Right cardiac atrium (tissue), 5 donors: ENCODE measurements at regions of chr12 and their contacts with region 1.

Region 1: GRCh38 chr12:116525418-116526001 is 33.7 kb upstream of the MAP1LC3B2 start:
- DNase-seq: peak; percentile 79 to 89 (median 85)
- ATAC-seq: peak; percentile 93 to 97
- H3K4me3 ChIP-seq: no peak overlapping the region
- H3K27ac ChIP-seq: peak overlapping the region; percentile 69
- H3K4me1 ChIP-seq: peaks cover 2% of the 10 kb centered on the region
- H3K27me3 ChIP-seq: no peaks in the 10 kb centered on the region

Region 2: GRCh38 chr12:115640929-115641328 is 884.6 kb before region 1 on chr12:
- intact Hi-C with region 1: loop called in 1 of 4 experiments (anchors 10 kb)
- DNase-seq: no peak
- ATAC-seq: no peak
- H3K4me3 ChIP-seq: no peak overlapping the region
- H3K27ac ChIP-seq: no peak overlapping the region
- H3K4me1 ChIP-seq: no peaks in the 10 kb centered on the region
- H3K27me3 ChIP-seq: no peaks in the 10 kb centered on the region

Region 3: DNA sequence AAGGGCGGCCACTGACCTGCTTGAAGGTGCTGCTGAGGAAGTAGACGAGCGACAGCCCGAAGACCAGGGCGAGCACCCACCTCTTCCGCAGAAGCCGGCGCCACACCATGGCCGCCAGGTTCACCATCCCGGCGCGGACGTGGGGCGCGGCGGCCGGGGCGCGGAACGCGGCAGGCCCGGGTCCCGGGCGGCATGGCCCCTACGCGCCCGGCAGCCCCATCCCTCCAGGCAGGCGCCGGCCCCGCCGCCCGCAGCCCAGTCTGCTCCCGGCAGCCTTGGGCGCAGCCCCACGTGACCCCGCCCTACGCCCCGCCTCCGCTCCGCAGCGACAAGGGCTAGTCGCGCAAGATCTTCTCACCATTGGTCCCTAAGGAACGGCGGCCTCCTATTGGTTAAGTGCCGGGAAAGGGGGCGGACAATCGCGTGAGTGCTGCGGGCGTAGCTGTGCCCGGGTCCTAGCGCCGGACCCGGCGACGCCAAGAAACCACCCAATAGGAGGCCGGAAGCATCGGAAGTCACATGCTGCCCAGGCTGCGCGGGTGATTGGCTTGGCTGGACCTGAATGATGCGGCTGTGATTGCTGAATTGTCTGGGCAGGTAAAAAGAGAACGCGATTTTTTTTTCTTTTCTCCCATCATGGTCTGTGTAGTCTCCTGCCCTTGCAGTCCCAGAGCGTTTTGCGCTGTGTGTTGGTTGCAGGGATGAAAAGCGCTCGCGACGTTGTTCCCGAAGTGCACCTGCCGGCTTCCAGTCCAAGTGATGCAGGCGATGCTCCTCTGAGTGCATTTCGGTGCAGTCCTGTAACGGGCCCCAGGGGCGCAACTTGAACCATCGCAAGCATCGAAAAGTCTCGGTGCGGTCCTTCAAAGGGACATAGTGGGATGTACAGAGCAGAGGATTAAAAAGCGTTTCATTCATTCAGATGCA is 212.5 kb after region 1 on chr12 and contains the starts of genes RNFT2 and SPRING1:
- intact Hi-C with region 1: no loop called
- DNase-seq: peak; percentile 99 to 100 (median 100)
- ATAC-seq: peak; percentile 100
- H3K4me3 ChIP-seq: peak within 1 kb of the TSS; percentile 90
- H3K27ac ChIP-seq: peak within 1 kb of the TSS; percentile 71
- H3K4me1 ChIP-seq: no peaks in the 10 kb centered on the region
- H3K27me3 ChIP-seq: no peaks in the 10 kb centered on the region
- total RNA-seq, gene RNFT2: 1.4 to 3.8 (median 2.5) TPM
- total RNA-seq, gene SPRING1: 9.2 to 16.0 (median 10.3) TPM